H1 (cell line): ENCODE measurements at regions of chr1 and their contacts with region 1.

Region 1: GRCh38 chr1:152001391-152002249 is 8.0 kb upstream of the S100A10 start:
- DNase-seq: peak in 1 of 2 experiments; percentile 88
- H3K4me3 ChIP-seq: no peak overlapping the region
- H3K27ac ChIP-seq: no peak overlapping the region
- H3K4me1 ChIP-seq: peaks cover 0 to 4% (median 0%) of the 10 kb centered on the region in 4 experiments; a peak in 1 of 7 replicates
- H3K27me3 ChIP-seq: no peaks in the 10 kb centered on the region
- CTCF ChIP-seq: peak; percentile 67 to 87 (median 85)
- EP300 ChIP-seq: no peak
- POLR2A ChIP-seq: no peak
- RAD21 ChIP-seq: peak; percentile 92 to 94

Region 2: GRCh38 chr1:151898513-151898991 is 103.1 kb before region 1 on chr1:
- CTCF ChIA-PET with region 1: interaction called, 40 read pairs
- POLR2A ChIA-PET with region 1: no interaction called
- DNase-seq: no peak
- H3K4me3 ChIP-seq: no peak overlapping the region
- H3K27ac ChIP-seq: no peak overlapping the region
- H3K4me1 ChIP-seq: no peaks in the 10 kb centered on the region
- H3K27me3 ChIP-seq: no peaks in the 10 kb centered on the region
- CTCF ChIP-seq: no peak
- EP300 ChIP-seq: no peak
- POLR2A ChIP-seq: no peak
- RAD21 ChIP-seq: no peak

Region 3: DNA sequence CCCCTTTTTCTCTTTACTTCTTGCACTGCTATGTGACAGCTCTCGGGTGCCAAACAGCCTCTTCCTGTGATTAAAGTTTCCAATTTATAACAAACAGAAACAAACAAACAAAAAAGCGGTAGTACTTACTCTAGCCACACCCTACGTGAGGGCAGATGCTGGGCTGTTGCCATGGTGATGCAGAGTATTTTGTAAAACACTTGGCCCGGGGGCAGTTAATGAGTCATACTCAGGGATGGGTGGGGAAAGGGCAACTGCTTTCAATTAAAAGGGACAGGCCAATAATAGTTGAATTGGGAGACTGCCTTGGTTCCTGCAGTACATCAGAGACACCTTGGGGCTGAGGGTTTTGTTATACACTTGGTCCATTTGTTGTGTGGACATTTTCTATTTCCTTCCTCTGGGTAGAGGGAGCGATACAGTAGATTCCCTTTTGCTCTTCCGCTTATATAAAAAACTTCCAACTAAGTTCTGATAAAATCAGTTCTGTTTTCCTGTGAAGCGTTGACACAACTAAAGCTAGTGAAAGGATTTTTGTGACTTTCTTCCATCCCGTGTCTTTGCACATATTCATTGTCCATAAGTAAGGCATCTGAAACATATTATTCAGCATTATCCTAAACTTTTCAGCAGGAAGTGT is 55.8 kb before region 1 on chr1:
- CTCF ChIA-PET with region 1: interaction called, 37 read pairs
- POLR2A ChIA-PET with region 1: no interaction called
- DNase-seq: peak; percentile 57 to 59
- H3K4me3 ChIP-seq: no peak overlapping the region
- H3K27ac ChIP-seq: 0 out of 2 replicates have a peak overlapping the region, but pooled peaks have one; percentile 14
- H3K4me1 ChIP-seq: peaks cover 0 to 3% (median 0%) of the 10 kb centered on the region in 4 experiments; a peak in 2 of 7 replicates
- H3K27me3 ChIP-seq: no peaks in the 10 kb centered on the region
- CTCF ChIP-seq: no peak
- EP300 ChIP-seq: peak in 1 of 2 experiments; percentile 83; a peak in 1 of 3 replicates
- POLR2A ChIP-seq: no peak; a peak in 1 of 3 replicates
- RAD21 ChIP-seq: no peak

Region 4: GRCh38 chr1:151968058-151968457 is 33.6 kb before region 1 on chr1:
- CTCF ChIA-PET with region 1: interaction called, 553 read pairs
- POLR2A ChIA-PET with region 1: interaction called, 7 read pairs
- DNase-seq: peak in 1 of 2 experiments; percentile 67
- H3K4me3 ChIP-seq: no peak overlapping the region
- H3K27ac ChIP-seq: no peak overlapping the region
- H3K4me1 ChIP-seq: peaks cover 0 to 11% (median 2%) of the 10 kb centered on the region in 4 experiments; a peak in 5 of 7 replicates
- H3K27me3 ChIP-seq: no peaks in the 10 kb centered on the region
- CTCF ChIP-seq: peak; percentile 38 to 86 (median 82)
- EP300 ChIP-seq: no peak
- POLR2A ChIP-seq: no peak
- RAD21 ChIP-seq: peak; percentile 93

Region 5: GRCh38 chr1:152034646-152035405 is 33.2 kb after region 1 on chr1:
- CTCF ChIA-PET with region 1: interaction called, 32 read pairs
- POLR2A ChIA-PET with region 1: no interaction called
- DNase-seq: peak in 1 of 2 experiments; percentile 87
- H3K4me3 ChIP-seq: peak overlapping the region in 2 of 4 experiments; percentile 74 to 76; a peak in 4 of 8 replicates
- H3K27ac ChIP-seq: no peak overlapping the region
- H3K4me1 ChIP-seq: peaks cover 4 to 12% (median 6%) of the 10 kb centered on the region in 4 experiments
- H3K27me3 ChIP-seq: no peaks in the 10 kb centered on the region; a peak in 2 of 7 replicates
- CTCF ChIP-seq: peak; percentile 56 to 79 (median 73)
- EP300 ChIP-seq: no peak
- POLR2A ChIP-seq: no peak
- RAD21 ChIP-seq: peak; percentile 42 to 56; a peak in 3 of 4 replicates